HEK293T (cell line): ENCODE measurements at regions of chr17 and their contacts with region 1.

Region 1: DNA sequence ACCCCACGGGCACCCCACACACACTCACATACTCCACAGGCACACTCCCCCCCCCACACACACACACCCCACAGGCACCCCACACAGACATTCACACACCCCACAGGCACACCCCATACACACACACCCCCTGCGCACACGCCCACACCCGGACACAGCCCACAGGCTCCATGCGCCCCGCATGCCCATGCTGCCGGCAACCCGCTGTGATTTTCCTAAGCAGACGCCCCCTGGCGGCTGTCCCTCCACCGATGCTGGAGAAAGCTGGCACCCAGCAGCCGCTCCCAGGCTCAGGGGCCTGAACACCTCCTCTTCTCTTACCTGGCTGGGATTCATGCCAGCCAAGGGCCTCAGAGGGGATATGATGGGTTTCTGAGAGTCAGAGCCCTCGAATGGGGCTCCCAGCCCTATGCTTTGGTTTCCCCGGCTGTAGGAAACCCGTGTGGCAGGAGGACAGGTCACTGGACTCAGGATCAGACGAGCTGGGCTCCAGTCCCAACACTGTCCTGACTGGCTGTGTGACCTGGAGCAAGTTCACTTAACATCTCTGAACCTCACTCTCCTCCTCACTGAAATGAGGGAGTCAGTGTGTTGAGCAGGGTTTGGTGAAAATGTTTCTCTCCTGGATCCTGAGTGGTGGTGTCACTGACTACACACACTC is 19.6 kb upstream of the TNFRSF13B start:
- DNase-seq: peak; percentile 89

Region 2: DNA sequence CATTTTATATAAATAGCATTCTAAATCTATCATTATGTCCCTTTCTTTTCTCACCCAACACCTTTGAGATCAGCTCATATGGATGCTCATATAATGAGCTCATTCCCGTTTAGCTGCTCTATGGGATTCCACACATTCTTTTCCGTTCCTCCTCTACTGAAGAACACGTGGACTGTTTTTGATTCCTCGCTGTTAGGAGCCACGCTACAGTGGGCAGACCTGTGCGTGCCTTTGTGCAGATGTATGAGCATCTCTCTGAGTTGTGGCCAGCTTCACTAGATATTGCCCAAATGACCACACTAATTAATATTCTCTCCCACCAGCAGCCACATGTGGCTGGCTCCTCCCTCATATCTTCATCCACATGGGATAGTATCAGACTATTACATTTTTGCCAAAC is 13.5 kb before region 1 on chr17:
- CTCF ChIA-PET with region 1: interaction called, 11 read pairs
- POLR2A ChIA-PET with region 1: no interaction called
- DNase-seq: no peak